Right ventricle myocardium superior (tissue), 1 donor: ENCODE measurements at regions of chr11 and their contacts with region 1.

Region 1: GRCh38 chr11:112219476-112220232 is 6.6 kb upstream of the PTS start:
- DNase-seq: no peak
- ATAC-seq: peak; percentile 95

Region 2: GRCh38 chr11:112280268-112281126 is 60.8 kb after region 1 on chr11:
- intact Hi-C with region 1: loop called (anchors 2 kb)
- DNase-seq: no peak
- ATAC-seq: peak; percentile 97